ENCODE measurements at regions of chr7 and their contacts with region 1.

Region 1: DNA sequence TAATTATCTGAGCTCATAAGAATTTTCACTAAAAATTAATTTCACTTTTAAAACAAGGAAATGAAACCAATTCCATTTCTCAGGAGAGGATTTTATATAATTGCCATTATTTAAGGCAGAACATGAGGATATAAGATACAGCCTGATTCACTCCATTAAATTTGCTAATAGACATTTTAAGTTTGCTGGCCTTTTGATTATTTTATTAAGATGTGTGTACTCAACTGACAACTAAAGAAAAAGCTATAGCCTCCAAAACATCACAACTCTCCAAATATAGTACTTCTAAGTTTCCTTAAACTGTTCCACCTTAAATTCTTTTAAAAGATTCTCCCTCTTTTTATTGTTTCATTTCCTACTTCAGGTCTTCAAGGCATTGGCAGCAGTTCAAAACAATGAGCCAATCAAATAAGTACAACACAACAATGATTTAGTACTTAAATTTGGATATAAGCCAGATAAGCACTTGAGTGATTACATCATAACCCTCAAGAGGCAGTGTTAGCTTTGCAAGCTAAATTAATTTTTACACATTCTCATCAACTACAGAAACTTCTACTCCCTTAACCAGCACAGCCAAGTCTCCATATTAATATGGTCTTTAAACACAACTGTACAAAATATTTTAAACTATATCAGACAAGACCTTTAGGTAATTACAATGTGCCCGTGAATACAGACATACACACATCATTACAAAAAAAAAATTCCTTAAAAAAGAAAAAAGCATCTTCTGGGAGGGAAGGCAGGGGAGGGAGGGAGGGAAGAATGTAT is 121.8 kb downstream of the KMT2C start:
- DNase-seq: no peak
- ATAC-seq: peak; percentile 60
- H3K4me3 ChIP-seq: no peak overlapping the region
- H3K27ac ChIP-seq: no peak overlapping the region
- H3K4me1 ChIP-seq: peaks cover 12% of the 10 kb centered on the region; the same call in 1 of the 2 replicates
- H3K27me3 ChIP-seq: no peaks in the 10 kb centered on the region
- CTCF ChIP-seq: no peak
- EP300 ChIP-seq: no peak
- POLR2A ChIP-seq: no peak
- RAD21 ChIP-seq: no peak

Region 2: DNA sequence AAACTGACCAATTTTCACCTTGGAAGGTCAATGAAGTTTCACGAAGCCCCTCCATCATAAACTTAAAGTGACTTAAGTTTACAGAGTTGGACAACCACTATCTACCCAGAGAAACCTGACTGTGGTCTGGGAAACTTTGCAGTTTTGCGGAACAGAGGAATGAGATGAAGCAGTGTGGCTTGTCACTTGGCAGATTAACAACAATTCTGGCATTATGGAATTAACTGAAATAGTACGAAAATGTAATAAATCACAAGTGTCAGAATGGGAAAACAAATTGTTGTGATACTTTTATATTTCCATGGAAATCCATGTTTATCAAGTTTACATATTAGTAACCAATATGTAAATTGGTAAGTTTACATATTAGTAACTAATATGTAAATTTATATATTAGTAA is 116.8 kb after region 1 on chr7:
- CTCF ChIA-PET with region 1: interaction called, 6 read pairs
- POLR2A ChIA-PET with region 1: interaction called, 3 read pairs
- RAD21 ChIA-PET with region 1: interaction called, 7 read pairs
- SMC1A ChIA-PET with region 1: interaction called, 11 read pairs
- in situ Hi-C with region 1: no loop called
- intact Hi-C with region 1: loop called (anchors 5 kb)
- DNase-seq: no peak
- ATAC-seq: no peak
- H3K4me3 ChIP-seq: peak overlapping the region; percentile 52; the same call in 1 of the 2 replicates
- H3K27ac ChIP-seq: peak overlapping the region; percentile 28; the same call in 1 of the 2 replicates
- H3K4me1 ChIP-seq: peaks cover 7% of the 10 kb centered on the region
- H3K27me3 ChIP-seq: no peaks in the 10 kb centered on the region
- CTCF ChIP-seq: no peak
- EP300 ChIP-seq: no peak
- POLR2A ChIP-seq: no peak
- RAD21 ChIP-seq: no peak

Region 3: DNA sequence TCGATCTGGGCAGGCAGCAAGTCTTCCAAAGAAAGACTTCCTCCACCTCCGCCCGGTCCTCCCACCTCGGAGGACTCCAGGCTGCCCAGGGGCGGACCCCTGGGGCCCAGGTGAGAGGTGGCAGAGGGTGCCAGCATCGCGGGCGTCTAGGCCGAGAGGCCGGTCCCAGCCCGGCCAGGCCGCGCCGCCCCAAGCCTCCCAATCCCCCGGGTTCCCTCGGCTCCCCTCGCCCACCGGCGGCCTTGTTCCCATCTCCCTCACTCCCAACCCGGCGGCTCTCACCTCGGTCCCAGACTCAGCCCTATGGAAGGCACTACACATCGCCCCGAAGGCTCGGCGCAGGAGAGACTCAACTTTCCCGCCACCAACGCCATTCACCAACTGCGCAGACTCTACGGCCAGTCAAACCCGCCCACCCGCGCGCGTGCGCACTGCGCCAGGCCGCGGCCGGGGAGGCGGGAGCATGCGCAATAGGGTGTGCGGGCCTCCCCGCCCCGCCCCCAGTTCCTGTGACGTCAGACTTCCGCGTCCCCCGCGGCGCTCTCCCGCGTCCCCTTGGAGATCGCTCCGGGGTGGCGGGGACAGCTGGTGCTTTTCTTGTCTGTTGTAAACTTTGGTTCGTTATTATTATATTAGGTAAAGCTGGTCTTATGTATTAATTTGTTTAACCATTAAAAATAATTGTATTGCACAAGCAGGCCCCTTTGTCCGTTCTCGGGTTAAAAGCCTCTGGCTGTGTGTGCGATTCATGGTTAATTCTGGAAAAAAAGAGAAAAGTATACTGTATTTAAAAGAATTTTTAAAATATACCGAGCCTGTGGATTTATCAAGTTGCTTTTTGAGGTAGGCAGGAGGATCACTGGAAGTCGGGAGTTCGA is 362.0 kb after region 1 on chr7 and contains the start of gene XRCC2:
- CTCF ChIA-PET with region 1: no interaction called
- POLR2A ChIA-PET with region 1: no interaction called
- RAD21 ChIA-PET with region 1: no interaction called
- SMC1A ChIA-PET with region 1: no interaction called
- in situ Hi-C with region 1: no loop called
- intact Hi-C with region 1: loop called (anchors 5 kb)
- DNase-seq: peak; percentile 77
- ATAC-seq: peak; percentile 96
- H3K4me3 ChIP-seq: peak within 1 kb of the TSS; percentile 96
- H3K27ac ChIP-seq: peak within 1 kb of the TSS; percentile 83
- H3K4me1 ChIP-seq: no peaks in the 10 kb centered on the region
- H3K27me3 ChIP-seq: no peaks in the 10 kb centered on the region
- CTCF ChIP-seq: no peak
- EP300 ChIP-seq: peak in 1 of 2 experiments; percentile 47; a peak in 1 of 4 replicates
- POLR2A ChIP-seq: peak; percentile 88
- RAD21 ChIP-seq: no peak
- polyA plus RNA-seq, gene XRCC2: 4.8 to 6.3 TPM